Lower leg skin (tissue), 4 donors: ENCODE measurements at regions of chr3 and their contacts with region 1.

Region 1: GRCh38 chr3:127455541-127456450 is 134.7 kb downstream of the TPRA1 start:
- DNase-seq: peak; percentile 45 to 90
- H3K4me3 ChIP-seq: no peak overlapping the region
- CTCF ChIP-seq: peak in 1 of 3 donors; percentile 18
- POLR2A ChIP-seq: no peak

Region 2: GRCh38 chr3:126679318-126679751 is 776.5 kb before region 1 on chr3:
- intact Hi-C with region 1: loop called (anchors 5 kb)
- DNase-seq: peak; percentile 73 to 96
- H3K4me3 ChIP-seq: no peak overlapping the region
- CTCF ChIP-seq: peak in 1 of 3 donors; percentile 46
- POLR2A ChIP-seq: no peak

Region 3: GRCh38 chr3:126752303-126752842 is 703.4 kb before region 1 on chr3:
- intact Hi-C with region 1: loop called (anchors 10 kb)
- DNase-seq: peak; percentile 70 to 94
- H3K4me3 ChIP-seq: no peak overlapping the region
- CTCF ChIP-seq: peak in 1 of 3 donors; percentile 73
- POLR2A ChIP-seq: no peak

Region 4: GRCh38 chr3:126982471-126983175 is 473.2 kb before region 1 on chr3 and contains the start of gene PLXNA1:
- intact Hi-C with region 1: loop called (anchors 10 kb)
- DNase-seq: peak; percentile 59 to 96
- H3K4me3 ChIP-seq: peak within 1 kb of the TSS; percentile 64
- CTCF ChIP-seq: peak in 2 of 3 donors; percentile 20 to 57
- POLR2A ChIP-seq: no peak
- total RNA-seq, gene PLXNA1: 35.8 to 44.9 (median 39.7) TPM

Region 5: GRCh38 chr3:127286571-127287140 is 169.1 kb before region 1 on chr3:
- intact Hi-C with region 1: no loop called
- DNase-seq: no peak
- H3K4me3 ChIP-seq: no peak overlapping the region
- CTCF ChIP-seq: no peak
- POLR2A ChIP-seq: no peak